ENCODE measurements at regions of chr3 and their contacts with region 1.

Region 1: GRCh38 chr3:48507351-48508061 is 3.5 kb upstream of the SHISA5 start:
- DNase-seq: peak; percentile 31 to 65 (median 50)
- ATAC-seq: peak; percentile 85
- H3K4me3 ChIP-seq: no peak overlapping the region
- H3K27ac ChIP-seq: no peak overlapping the region
- H3K4me1 ChIP-seq: peaks cover 6 to 27% of the 10 kb centered on the region in 2 experiments; a peak in 4 of 5 replicates
- H3K27me3 ChIP-seq: no peaks in the 10 kb centered on the region
- CTCF ChIP-seq: peak; percentile 69 to 75 (median 72)
- EP300 ChIP-seq: no peak
- POLR2A ChIP-seq: no peak
- RAD21 ChIP-seq: peak; percentile 37 to 72

Region 2: DNA sequence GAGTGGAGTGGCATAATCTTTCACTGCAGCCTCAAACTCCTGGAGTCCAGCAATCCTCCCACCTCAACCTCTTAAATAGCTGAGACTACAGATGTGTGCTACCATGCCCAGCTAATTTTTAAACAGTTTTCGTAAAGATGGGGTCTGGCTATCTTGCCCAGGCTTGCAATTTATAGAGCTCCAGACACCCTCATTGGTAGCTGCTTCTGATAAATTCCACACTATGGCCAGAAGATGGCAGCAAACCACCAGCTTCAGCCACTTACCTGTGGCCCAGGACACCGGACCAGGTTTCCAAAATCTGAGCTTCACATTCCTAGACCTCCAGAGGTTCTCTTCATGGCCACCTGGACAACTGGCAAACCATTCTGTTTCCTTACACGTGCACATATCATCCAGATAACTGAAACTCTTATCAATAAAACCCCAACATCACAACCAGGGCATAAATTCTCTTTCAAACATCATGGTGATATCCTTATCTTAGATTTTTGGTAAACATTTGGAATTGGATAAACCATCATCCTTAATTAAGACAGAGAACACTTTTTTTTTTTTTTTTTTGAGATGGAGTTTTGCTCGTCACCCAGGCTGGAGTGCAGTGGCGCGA is 106.6 kb before region 1 on chr3:
- CTCF ChIA-PET with region 1: no interaction called
- POLR2A ChIA-PET with region 1: no interaction called
- in situ Hi-C with region 1: no loop called
- intact Hi-C with region 1: loop called (anchors 10 kb)
- DNase-seq: peak; percentile 74 to 79 (median 76)
- ATAC-seq: peak; percentile 86
- H3K4me3 ChIP-seq: no peak overlapping the region
- H3K27ac ChIP-seq: no peak overlapping the region
- H3K4me1 ChIP-seq: peaks cover 0 to 7% of the 10 kb centered on the region in 2 experiments; a peak in 1 of 5 replicates
- H3K27me3 ChIP-seq: no peaks in the 10 kb centered on the region
- CTCF ChIP-seq: peak; percentile 75 to 82 (median 78)
- EP300 ChIP-seq: no peak
- POLR2A ChIP-seq: no peak
- RAD21 ChIP-seq: peak; percentile 69 to 83

Region 3: DNA sequence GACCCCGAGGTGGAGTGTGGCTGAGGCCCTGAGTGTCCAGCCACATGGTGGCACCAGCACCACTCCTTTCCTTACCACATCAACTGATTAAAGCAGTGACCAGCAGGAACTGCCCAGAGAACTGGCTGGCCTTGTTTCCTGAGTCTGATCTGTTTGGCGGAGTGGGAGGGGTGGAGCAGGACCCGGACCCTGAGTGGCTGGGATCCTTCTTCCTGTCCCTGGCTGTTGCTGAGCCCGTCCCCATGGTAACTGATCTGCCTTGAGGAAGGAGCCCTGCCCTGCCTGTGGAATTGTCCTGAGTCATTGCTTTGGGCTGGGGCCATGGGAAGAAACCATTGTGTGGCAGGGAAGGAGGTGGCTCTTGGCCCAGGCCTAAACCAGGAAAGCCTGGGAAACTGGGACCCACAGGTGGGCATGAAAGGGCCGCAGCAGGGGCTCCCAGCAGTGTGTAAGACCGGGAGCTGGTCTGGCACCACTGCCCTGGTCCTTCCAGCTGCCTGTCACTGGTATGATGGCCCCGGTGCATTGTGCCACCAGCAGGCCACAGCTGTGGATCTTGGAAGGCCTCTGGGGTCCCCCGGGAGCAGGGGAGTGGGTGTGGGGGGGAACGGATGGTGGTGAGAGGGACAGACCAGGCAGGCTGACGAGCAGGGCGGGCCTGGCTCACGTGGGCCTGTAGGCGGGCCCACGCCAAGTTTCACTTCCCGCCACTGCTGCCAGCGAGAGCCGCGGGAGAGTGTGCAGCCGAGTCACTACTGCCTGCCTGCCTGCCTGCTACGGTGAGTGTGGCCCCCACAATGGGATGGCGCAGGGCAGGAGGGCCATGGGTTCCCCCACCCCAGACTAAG is 41.8 kb before region 1 on chr3:
- CTCF ChIA-PET with region 1: no interaction called
- POLR2A ChIA-PET with region 1: no interaction called
- in situ Hi-C with region 1: no loop called
- intact Hi-C with region 1: loop called (anchors 1 kb)
- DNase-seq: peak; percentile 69 to 88 (median 82)
- ATAC-seq: peak; percentile 94
- H3K4me3 ChIP-seq: no peak overlapping the region
- H3K27ac ChIP-seq: peak overlapping the region; percentile 88
- H3K4me1 ChIP-seq: peaks cover 6 to 48% of the 10 kb centered on the region in 2 experiments
- H3K27me3 ChIP-seq: no peaks in the 10 kb centered on the region
- CTCF ChIP-seq: peak; percentile 57 to 62 (median 60)
- EP300 ChIP-seq: no peak
- POLR2A ChIP-seq: 0 out of 2 replicates have a peak, but pooled peaks have one; percentile 27
- RAD21 ChIP-seq: peak; percentile 44 to 71; a peak in 3 of 4 replicates

Region 4: DNA sequence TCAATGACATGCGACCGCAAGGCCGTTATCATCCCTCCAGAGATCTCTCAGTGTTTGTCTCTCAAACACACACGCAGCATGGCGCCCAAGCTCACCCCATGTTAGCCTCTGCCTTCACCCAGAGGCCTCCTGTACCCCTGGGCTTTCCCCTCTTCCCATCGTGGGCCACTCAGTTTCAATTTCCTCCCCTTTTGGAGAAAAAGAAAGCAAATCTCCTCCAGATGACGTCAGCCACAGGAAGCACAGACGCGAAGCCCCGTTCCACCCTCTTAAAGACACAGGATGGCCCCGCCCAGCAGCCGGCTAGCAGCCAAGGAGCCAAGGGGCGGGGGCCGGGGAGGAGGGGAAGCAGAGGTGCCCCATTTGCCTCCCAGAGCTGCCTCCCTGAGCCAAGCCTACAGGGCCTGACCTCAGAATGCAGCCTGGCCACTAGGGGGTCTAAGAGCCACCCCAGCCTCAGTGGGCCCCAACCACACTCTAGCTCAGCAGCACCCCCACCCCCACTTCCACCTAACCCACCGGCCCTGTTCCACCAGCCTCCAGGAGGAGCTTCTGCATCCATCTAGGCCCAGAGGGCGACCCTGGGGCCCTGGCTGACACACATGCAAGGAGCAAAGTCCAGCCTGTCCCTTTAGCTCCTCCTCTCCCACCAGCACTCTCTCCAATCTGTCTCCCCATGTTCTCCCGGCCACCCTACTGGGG is 34.4 kb before region 1 on chr3:
- CTCF ChIA-PET with region 1: no interaction called
- POLR2A ChIA-PET with region 1: interaction called, 4 read pairs
- in situ Hi-C with region 1: no loop called
- intact Hi-C with region 1: loop called (anchors 2 kb)
- DNase-seq: peak; percentile 91 to 93 (median 92)
- ATAC-seq: peak; percentile 96
- H3K4me3 ChIP-seq: peak overlapping the region; percentile 46
- H3K27ac ChIP-seq: peak overlapping the region; percentile 99
- H3K4me1 ChIP-seq: peaks cover 5 to 42% of the 10 kb centered on the region in 2 experiments; a peak in 4 of 5 replicates
- H3K27me3 ChIP-seq: no peaks in the 10 kb centered on the region
- CTCF ChIP-seq: peak; percentile 54 to 59 (median 55)
- EP300 ChIP-seq: no peak
- POLR2A ChIP-seq: peak; percentile 88
- RAD21 ChIP-seq: peak in 1 of 2 experiments; percentile 22; a peak in 1 of 4 replicates

Region 5: GRCh38 chr3:48548729-48549705 is 41.5 kb after region 1 on chr3:
- CTCF ChIA-PET with region 1: no interaction called
- POLR2A ChIA-PET with region 1: no interaction called
- in situ Hi-C with region 1: no loop called
- intact Hi-C with region 1: loop called (anchors 2 kb)
- DNase-seq: peak; percentile 54 to 79 (median 63)
- ATAC-seq: peak; percentile 99
- H3K4me3 ChIP-seq: no peak overlapping the region
- H3K27ac ChIP-seq: no peak overlapping the region
- H3K4me1 ChIP-seq: peaks cover 7 to 11% of the 10 kb centered on the region in 2 experiments; a peak in 4 of 5 replicates
- H3K27me3 ChIP-seq: no peaks in the 10 kb centered on the region
- CTCF ChIP-seq: peak; percentile 80 to 89 (median 86)
- EP300 ChIP-seq: no peak
- POLR2A ChIP-seq: no peak
- RAD21 ChIP-seq: peak; percentile 60 to 82

Region 6: DNA sequence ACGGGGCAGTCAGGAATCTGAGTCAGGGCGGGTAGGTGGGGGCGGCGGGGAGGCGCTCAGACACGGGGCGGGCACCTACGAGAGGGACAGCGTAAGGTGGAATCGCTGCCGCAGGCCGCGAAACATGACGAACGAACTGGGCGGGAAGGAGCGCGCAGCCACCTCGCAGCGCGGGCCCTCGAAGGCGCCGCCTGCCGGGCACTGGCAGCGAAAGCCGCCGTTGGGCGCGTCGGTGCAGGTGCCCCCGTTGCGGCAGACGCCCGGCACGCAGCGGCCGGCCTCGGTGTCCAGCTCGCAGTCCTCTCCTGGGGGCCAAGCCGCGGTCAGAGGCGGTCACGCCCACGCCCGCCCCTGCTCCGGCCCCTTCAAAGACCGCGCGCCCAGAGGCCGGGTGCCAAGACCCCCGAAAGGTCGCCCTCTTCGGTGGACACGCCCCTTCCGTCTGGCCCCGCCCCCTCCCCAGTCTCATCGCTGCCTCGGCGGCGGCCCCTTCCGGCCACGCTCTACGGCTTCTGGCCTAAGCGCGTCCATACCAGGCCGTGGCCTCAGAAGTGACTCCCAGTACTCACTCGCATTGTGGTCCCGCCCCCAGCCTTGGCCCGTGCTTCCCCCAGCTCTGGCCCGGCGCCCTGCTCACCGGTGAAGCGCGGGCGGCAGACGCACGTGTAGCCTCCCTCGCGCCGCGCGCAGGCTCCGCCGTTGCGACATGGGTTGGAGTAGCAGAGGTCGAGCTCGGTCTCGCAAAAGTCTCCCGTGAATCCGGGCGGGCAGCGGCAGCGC is 148.7 kb after region 1 on chr3:
- CTCF ChIA-PET with region 1: no interaction called
- POLR2A ChIA-PET with region 1: no interaction called
- in situ Hi-C with region 1: no loop called
- intact Hi-C with region 1: no loop called
- DNase-seq: no peak
- ATAC-seq: no peak
- H3K4me3 ChIP-seq: no peak overlapping the region
- H3K27ac ChIP-seq: no peak overlapping the region
- H3K4me1 ChIP-seq: peaks cover 0 to 14% of the 10 kb centered on the region in 2 experiments; a peak in 2 of 5 replicates
- H3K27me3 ChIP-seq: no peaks in the 10 kb centered on the region; a peak in 1 of 5 replicates
- CTCF ChIP-seq: no peak
- EP300 ChIP-seq: no peak
- POLR2A ChIP-seq: no peak
- RAD21 ChIP-seq: no peak

Measured in K562 (cell line).